Dorsolateral prefrontal cortex (tissue), 120 donors: ENCODE measurements at regions of chr17 and their contacts with region 1.

Region 1: DNA sequence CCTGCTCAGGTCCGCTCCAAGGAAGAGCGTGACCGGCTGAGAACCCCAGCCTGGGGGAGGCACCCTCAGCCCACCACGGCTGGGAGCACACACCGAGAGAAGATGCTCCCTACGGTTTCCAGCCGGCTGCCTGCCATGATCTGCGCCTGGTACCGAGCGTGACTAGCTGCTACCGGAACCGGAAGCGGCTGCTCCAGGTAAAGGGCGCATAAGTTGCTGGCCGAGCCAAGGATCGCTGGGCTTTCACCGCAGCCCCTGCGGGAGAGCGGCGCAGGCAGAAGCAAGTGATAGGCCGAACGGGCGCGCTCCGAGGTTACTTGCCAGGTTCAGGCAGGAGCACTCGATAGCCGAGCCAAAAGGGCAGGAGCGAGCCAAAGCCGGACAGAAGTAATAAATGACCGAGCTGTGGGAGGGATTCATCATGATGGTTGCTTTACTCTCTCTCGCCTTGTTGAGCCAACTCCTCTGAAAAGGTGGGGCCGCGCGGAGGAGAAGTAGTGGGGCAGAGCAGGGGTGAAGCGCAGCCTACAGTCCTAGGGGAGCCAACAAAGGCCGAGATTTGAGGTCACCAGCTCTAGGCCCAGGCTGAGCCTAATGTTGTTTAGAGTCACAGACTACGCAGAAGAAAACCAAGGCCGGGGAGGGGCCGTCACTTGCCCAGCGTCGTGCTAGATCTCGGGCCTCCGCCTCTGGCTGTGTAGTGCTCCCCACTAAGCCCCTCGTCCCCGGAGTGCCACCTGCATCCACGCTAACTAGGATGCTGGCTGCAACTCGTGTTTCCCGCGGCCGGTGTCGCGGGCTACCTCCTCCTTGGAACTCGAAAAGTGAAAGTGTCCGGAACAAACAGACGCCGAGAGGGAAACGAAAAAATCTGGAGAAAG is at the start of gene MRPS23:
- DNase-seq: peak; percentile 95 to 99 (median 98)
- H3K4me3 ChIP-seq: peak within 1 kb of the TSS; percentile 67 to 100 (median 94)
- H3K27ac ChIP-seq: peak within 1 kb of the TSS; percentile 53 to 97 (median 91)
- H3K27me3 ChIP-seq: no peaks in the 10 kb centered on the region
- CTCF ChIP-seq: peak in 37 of 56 donors; percentile 7 to 58 (median 36)
- total RNA-seq, gene MRPS23: 32.8 to 72.7 (median 51.3) TPM

Region 2: DNA sequence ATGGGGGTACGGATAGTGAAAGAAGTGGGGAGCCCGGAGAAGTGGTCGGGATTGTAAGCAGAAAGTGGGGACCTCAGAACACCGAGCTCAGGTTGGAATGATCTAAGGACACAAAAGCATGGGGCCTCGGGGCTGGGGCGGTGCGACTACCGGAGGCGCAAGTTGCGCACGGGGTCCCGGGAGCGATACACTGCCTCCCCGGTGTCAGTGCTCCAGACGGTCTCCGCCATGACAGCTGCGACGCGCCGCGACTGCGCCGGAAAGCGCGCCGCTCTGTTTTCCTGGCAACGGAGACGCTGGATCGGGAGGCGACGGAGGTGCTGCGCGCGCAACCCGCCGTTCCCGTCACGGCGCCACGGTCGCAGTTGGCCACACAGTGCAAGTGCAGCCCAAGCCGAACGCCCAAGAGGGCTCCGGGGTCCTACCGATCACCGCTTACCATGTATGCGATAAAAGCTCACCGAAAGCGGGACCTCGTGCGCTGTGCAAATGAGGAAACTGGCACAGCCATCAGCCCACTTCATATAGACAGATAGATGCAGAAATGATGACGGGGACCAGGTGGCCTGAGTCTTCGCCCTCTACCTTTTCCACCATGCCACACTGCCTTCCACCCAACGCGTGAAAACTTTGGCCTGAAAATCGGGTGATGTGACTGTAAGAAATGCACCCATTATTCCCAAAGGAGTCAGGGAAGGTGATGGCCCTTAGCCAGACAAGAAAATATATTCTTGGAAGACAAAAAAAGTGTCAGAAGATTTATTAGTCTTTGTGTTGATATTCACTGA is 369.1 kb after region 1 on chr17 and contains the start of gene MKS1:
- intact Hi-C with region 1: loop called in 1 of 2 experiments (anchors 10 kb)
- DNase-seq: peak; percentile 90 to 96 (median 95)
- H3K4me3 ChIP-seq: peak within 1 kb of the TSS; percentile 56 to 97 (median 82)
- H3K27ac ChIP-seq: peak within 1 kb of the TSS in 54 of 59 donors; percentile 36 to 91 (median 77)
- H3K27me3 ChIP-seq: no peaks in the 10 kb centered on the region
- CTCF ChIP-seq: peak; percentile 12 to 82 (median 66)
- total RNA-seq, gene MKS1: 16.0 to 48.1 (median 25.0) TPM

Region 3: DNA sequence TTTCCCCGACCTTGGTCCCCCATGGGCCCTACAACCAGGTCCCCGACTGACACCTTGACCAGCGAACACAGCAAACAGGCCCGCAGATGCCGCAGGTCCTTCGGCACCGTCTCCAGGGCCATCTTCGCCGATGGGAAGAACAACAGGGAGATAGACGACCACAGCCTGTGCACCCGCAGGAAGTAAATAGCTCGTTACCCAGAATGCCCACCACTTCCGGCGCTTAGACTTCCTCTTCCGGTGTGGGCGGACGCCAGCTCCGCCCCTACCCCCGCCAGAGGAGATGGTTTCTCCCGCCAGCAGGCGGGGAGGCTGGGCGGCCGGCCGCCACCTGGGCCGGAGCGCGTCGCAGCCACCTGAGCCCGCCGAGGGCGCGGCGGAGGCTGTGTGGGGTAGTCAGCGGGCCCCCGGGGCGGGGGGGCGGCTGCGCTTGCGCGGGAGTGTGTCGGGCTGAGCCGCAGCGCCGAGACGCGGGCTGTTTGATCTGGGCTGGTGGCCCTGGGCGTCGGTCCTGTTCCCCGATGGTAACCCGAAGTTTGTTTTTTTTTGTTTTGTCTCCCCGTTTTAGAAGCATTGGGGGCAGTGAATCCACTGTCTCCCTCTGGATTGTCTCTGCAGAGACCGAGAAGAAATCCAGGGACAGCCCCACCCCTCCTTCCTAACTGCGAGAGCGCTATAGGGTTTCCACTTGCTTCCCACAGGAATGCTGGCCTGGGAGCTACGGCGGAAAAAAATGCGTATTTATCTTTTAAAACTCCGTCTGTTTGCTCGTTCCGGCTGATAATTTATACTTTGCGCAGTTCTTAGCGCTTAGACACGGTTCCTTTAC is 502.1 kb after region 1 on chr17 and contains the start of gene SUPT4H1:
- intact Hi-C with region 1: loop called in 1 of 2 experiments (anchors 10 kb)
- DNase-seq: peak; percentile 71 to 92 (median 78)
- H3K4me3 ChIP-seq: peak within 1 kb of the TSS; percentile 71 to 100 (median 93)
- H3K27ac ChIP-seq: peak within 1 kb of the TSS; percentile 66 to 98 (median 93)
- H3K27me3 ChIP-seq: no peaks in the 10 kb centered on the region
- CTCF ChIP-seq: peak in 36 of 56 donors; percentile 13 to 57 (median 34)
- total RNA-seq, gene SUPT4H1: 34.1 to 73.3 (median 52.1) TPM